Posterior cingulate gyrus (tissue), 11 donors: ENCODE measurements at regions of chrX and their contacts with region 1.

Region 1: GRCh38 chrX:120457766-120458180 is 11.3 kb downstream of the LAMP2 start:
- DNase-seq: no peak

Region 2: DNA sequence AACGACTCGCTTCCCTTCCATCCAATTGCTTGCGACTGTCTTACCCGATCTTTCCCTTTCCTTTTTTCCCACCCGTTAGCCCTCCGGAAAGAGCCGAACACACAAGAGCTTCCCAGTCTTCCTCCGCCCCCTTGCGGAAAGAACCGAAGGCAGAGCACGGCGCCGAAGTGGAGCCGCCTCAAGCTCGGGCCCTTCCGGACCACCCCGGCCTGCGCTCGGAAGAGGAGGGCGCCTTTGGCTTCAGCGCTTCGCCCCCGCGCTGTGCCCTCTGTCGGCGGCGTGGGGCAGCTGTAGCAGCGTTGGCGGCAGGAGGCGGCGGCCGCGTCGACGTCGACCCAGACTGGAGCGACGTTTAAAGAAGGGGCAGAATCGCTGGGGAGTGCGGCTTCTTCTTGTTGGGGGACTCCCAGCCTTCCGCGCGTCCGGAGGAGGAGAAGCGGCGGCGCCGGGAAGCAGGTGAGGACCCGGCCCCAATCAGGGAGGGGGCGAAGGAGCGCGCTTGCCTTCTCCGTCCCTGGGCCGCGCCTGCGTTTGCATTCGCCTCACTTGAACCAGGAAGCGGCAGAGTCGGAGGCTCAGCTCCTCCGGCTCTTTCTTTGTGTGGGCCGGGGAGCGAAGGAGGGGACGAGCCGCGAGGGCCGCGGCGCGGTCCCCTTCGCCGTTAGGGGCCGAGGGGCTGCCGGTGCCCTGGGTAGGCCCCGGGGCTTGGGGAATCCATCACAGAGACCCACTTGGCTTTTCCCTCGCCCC is 207.1 kb before region 1 on chrX and contains the start of gene ZBTB33:
- intact Hi-C with region 1: loop called (anchors 10 kb)
- DNase-seq: peak; percentile 72 to 97 (median 80)

Region 3: GRCh38 chrX:120310861-120311726 is 146.7 kb before region 1 on chrX and contains the start of gene TMEM255A:
- intact Hi-C with region 1: loop called (anchors 10 kb)
- DNase-seq: peak in 7 of 10 donors; percentile 8 to 91 (median 28)

Region 4: GRCh38 chrX:120365320-120365719 is 92.5 kb before region 1 on chrX:
- intact Hi-C with region 1: loop called (anchors 10 kb)
- DNase-seq: peak in 8 of 10 donors; percentile 17 to 85 (median 63)

Region 5: GRCh38 chrX:120562569-120562926 is 104.8 kb after region 1 on chrX:
- intact Hi-C with region 1: no loop called
- DNase-seq: no peak